Calu3 (cell line): ENCODE measurements at regions of chr1 and their contacts with region 1.

Region 1: DNA sequence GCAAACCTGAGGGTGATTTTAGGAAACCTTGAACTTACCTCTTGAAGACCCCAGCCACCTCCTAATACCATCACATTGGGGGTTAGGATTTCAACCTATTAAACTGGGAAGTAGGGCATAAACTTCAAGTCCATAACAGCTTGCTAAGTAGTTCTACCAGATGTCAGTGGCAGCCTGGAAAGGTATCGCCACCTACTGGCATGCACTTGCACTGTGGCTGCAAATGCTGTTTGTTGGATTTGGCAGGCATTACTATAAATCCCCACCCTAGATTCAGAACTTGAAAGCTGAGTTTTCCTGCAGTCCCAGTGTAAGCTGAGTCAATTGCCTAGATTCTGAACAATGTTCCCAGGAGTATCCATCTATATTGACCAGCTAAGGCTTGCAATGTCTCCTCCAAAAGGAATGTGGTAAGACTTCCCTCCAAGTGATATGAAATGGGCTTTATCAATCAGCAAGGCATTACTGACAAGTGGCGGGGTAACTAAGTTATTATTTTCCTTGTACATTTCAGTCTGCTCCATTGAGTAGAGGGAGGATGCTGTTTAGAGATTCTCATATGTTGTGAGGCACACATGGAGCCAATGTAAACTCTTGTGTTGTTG is 474.5 kb downstream of the PTPRC start:
- DNase-seq: peak; percentile 69
- H3K4me3 Mint-ChIP-seq: no peak overlapping the region
- H3K27ac Mint-ChIP-seq: no peak overlapping the region
- H3K4me1 Mint-ChIP-seq: no peaks in the 10 kb centered on the region
- H3K27me3 Mint-ChIP-seq: no peaks in the 10 kb centered on the region
- CTCF ChIP-seq: peak; percentile 77

Region 2: DNA sequence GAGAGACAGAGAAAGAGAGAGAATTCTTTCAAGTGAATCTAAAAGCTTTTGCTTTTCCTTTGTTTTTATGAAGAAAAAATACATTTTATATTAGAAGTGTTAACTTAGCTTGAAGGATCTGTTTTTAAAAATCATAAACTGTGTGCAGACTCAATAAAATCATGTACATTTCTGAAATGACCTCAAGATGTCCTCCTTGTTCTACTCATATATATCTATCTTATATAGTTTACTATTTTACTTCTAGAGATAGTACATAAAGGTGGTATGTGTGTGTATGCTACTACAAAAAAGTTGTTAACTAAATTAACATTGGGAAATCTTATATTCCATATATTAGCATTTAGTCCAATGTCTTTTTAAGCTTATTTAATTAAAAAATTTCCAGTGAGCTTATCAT is 356.9 kb before region 1 on chr1:
- CTCF ChIA-PET with region 1: no interaction called
- intact Hi-C with region 1: loop called (anchors 5 kb)
- DNase-seq: no peak
- H3K4me3 Mint-ChIP-seq: no peak overlapping the region
- H3K27ac Mint-ChIP-seq: no peak overlapping the region
- H3K4me1 Mint-ChIP-seq: no peaks in the 10 kb centered on the region
- H3K27me3 Mint-ChIP-seq: no peaks in the 10 kb centered on the region
- CTCF ChIP-seq: no peak

Region 3: DNA sequence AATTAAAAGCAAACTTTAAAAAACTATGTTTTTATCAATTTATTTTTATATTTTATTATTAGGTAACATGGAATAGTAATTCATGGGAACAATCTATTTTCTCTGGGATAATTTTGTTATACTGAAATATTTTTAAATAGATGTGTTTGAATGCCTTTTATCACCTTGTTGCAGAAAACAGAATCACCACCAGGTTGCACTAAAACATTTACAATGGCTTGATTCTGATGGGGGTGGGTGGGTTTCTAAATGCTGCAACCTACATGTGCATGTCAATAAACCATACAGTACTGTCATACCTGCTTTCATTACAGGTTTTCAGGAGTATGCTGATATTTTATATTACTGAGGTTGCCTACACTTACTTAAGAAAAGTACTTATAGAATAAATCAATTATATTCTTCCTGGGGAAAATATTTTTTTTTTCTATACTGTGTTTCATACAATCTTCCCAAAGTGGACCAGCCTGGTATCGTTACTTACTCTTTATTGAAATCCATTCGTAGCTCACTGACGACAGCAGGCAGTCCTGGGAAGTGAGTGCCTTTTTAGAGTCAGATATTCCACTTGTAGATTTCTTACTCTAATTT is 341.7 kb before region 1 on chr1:
- CTCF ChIA-PET with region 1: interaction called, 3 read pairs
- intact Hi-C with region 1: loop called (anchors 5 kb)
- DNase-seq: peak; percentile 42
- H3K4me3 Mint-ChIP-seq: no peak overlapping the region
- H3K27ac Mint-ChIP-seq: no peak overlapping the region
- H3K4me1 Mint-ChIP-seq: no peaks in the 10 kb centered on the region
- H3K27me3 Mint-ChIP-seq: no peaks in the 10 kb centered on the region
- CTCF ChIP-seq: peak; percentile 73

Region 4: GRCh38 chr1:198837278-198838021 is 275.9 kb before region 1 on chr1:
- CTCF ChIA-PET with region 1: no interaction called
- intact Hi-C with region 1: loop called (anchors 5 kb)
- DNase-seq: no peak
- H3K4me3 Mint-ChIP-seq: no peak overlapping the region
- H3K27ac Mint-ChIP-seq: no peak overlapping the region
- H3K4me1 Mint-ChIP-seq: peaks cover 20% of the 10 kb centered on the region
- H3K27me3 Mint-ChIP-seq: no peaks in the 10 kb centered on the region
- CTCF ChIP-seq: no peak

Region 5: GRCh38 chr1:198937231-198938031 is 175.9 kb before region 1 on chr1:
- CTCF ChIA-PET with region 1: interaction called, 6 read pairs
- intact Hi-C with region 1: loop called (anchors 5 kb)
- DNase-seq: peak; percentile 66
- H3K4me3 Mint-ChIP-seq: no peak overlapping the region
- H3K27ac Mint-ChIP-seq: no peak overlapping the region
- H3K4me1 Mint-ChIP-seq: no peaks in the 10 kb centered on the region
- H3K27me3 Mint-ChIP-seq: no peaks in the 10 kb centered on the region
- CTCF ChIP-seq: no peak

Region 6: GRCh38 chr1:199243423-199244061 is 130.2 kb after region 1 on chr1:
- CTCF ChIA-PET with region 1: no interaction called
- intact Hi-C with region 1: loop called (anchors 2 kb)
- DNase-seq: peak; percentile 83
- H3K4me3 Mint-ChIP-seq: no peak overlapping the region
- H3K27ac Mint-ChIP-seq: no peak overlapping the region
- H3K4me1 Mint-ChIP-seq: peaks cover 38% of the 10 kb centered on the region
- H3K27me3 Mint-ChIP-seq: no peaks in the 10 kb centered on the region
- CTCF ChIP-seq: peak; percentile 69

Region 7: DNA sequence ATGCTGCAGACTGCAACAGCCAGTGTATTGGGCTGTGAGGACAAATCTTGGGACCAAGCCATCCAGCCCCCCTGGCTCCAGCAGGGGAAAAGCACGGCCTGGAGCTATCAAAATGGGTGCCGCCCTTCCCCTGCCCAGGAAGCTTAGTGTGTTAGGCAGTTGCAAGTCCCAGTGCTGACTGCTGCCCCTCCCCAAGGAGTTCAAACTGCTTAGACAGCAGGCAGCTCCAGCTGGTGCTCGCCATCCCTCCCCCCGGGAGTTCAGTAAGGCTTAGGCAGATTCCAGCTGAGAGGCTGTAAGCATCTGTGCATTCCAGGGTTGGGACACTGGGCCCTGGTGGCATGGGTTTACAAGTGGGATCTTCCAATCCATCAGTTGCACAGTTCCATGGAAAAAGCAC is 334.5 kb after region 1 on chr1:
- CTCF ChIA-PET with region 1: no interaction called
- intact Hi-C with region 1: no loop called
- DNase-seq: peak; percentile 28
- H3K4me3 Mint-ChIP-seq: no peak overlapping the region
- H3K27ac Mint-ChIP-seq: peak overlapping the region; percentile 92
- H3K4me1 Mint-ChIP-seq: peaks cover 41% of the 10 kb centered on the region
- H3K27me3 Mint-ChIP-seq: no peaks in the 10 kb centered on the region
- CTCF ChIP-seq: no peak